CD8-positive, alpha-beta T cell (primary cell): ENCODE measurements at regions of chr15 and their contacts with region 1.

Region 1: DNA sequence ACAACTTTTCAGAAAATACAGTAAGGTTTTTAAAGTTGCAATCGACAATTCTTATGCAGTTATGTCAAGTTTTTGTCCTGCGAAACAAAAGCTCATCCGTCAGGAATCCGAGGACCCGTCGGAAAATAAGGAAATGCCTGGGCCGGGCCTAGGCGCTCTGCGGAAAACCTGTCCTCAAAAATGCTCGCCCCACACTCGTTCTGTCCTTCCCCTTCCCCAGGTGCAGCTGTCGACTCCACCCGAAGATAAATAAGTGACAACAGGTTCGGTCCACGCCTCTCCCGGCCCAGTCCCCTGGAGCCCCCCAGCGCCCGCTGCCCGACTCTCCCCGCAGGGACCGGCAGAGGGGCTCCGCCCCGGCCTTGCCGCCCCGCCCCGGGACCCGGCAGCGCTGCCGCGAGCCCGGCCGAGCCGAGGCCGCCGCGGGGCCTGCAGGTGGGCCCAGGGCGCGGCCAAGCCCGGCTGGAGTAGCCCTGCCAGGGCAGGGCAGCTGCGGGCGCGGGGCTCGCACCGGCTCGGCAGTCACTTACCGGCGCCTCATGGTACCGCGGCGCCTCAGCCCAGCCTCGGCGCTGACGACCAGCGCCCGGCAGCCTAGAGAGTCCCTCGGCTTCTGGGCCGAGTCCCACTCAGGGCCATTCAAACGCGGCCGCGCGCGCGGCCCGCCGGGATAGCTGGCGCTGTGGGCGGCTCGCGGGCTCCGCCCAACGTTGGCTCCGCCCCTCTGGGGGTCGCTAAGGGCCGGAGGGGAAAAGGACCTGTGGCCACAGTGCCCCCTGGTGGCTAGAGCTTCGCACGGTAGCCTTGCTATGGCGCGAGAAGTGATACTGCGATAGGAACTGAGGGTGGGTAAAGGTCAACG is at the start of gene KATNBL1:
- DNase-seq: peak; percentile 88 to 99 (median 97)
- ATAC-seq: peak; percentile 94
- H3K4me3 ChIP-seq: peak within 1 kb of the TSS; percentile 49 to 71
- H3K4me3 Mint-ChIP-seq: peak within 1 kb of the TSS; percentile 92
- H3K27ac ChIP-seq: peak within 1 kb of the TSS; percentile 38 to 62
- H3K27ac Mint-ChIP-seq: peak within 1 kb of the TSS; percentile 92
- H3K4me1 ChIP-seq: peaks cover 14% of the 10 kb centered on the region
- H3K4me1 Mint-ChIP-seq: peaks cover 26% of the 10 kb centered on the region
- H3K27me3 ChIP-seq: no peaks in the 10 kb centered on the region
- H3K27me3 Mint-ChIP-seq: no peaks in the 10 kb centered on the region
- CTCF ChIP-seq: peak; percentile 69
- total RNA-seq, gene KATNBL1: 9.3 to 10.0 TPM

Region 2: DNA sequence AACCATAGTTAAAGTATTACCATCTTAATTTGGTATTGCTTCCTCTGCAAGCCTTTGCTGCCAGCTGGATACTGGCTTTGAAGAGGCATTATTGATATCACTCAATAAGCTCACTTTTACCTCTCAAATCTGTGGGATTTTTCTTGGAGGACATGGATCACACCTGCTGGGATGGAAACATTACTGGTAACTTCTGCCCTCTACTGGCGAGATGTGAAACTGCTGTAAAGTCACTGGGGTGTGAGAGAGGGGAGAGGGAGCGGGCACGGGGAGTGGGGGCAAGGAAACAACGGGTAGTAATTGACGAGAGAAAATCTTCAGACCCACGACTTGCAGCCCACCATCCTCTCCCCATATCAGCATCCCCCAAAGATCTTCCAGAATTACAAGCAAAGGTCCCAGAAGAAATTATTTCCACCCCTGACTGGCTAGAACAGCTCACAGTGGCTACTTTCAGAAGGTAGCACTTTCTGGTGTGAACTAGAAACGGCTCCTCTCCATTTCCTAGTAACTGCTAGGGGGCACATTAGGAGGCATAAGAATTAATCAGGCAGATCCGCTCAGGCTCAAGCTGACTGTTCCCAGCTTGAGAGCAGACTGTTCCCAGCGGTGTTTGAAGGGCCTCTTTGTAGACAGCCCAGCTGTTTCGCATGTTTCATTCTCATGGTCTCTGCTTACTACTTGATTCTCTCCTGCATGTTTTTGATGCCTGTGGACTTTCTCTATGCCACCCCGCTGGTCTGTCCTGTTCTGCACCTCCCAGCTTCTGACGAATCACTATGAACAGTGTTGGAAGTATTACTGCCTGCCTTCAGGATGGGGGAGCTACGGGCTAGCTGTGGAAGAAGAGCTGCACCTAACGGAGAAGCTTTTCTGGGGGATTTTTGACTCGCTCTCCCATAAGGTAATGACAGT is 471.7 kb before region 1 on chr15:
- CTCF ChIA-PET with region 1: no interaction called
- POLR2A ChIA-PET with region 1: no interaction called
- intact Hi-C with region 1: loop called in 1 of 2 experiments (anchors 10 kb)
- DNase-seq: peak in 5 of 9 experiments; percentile 17 to 50 (median 26)
- ATAC-seq: no peak
- H3K4me3 ChIP-seq: no peak overlapping the region
- H3K4me3 Mint-ChIP-seq: no peak overlapping the region
- H3K27ac ChIP-seq: no peak overlapping the region
- H3K27ac Mint-ChIP-seq: no peak overlapping the region
- H3K4me1 ChIP-seq: no peaks in the 10 kb centered on the region
- H3K4me1 Mint-ChIP-seq: peaks cover 4% of the 10 kb centered on the region
- H3K27me3 ChIP-seq: no peaks in the 10 kb centered on the region
- H3K27me3 Mint-ChIP-seq: peaks cover 2% of the 10 kb centered on the region
- CTCF ChIP-seq: peak; percentile 79

Region 3: DNA sequence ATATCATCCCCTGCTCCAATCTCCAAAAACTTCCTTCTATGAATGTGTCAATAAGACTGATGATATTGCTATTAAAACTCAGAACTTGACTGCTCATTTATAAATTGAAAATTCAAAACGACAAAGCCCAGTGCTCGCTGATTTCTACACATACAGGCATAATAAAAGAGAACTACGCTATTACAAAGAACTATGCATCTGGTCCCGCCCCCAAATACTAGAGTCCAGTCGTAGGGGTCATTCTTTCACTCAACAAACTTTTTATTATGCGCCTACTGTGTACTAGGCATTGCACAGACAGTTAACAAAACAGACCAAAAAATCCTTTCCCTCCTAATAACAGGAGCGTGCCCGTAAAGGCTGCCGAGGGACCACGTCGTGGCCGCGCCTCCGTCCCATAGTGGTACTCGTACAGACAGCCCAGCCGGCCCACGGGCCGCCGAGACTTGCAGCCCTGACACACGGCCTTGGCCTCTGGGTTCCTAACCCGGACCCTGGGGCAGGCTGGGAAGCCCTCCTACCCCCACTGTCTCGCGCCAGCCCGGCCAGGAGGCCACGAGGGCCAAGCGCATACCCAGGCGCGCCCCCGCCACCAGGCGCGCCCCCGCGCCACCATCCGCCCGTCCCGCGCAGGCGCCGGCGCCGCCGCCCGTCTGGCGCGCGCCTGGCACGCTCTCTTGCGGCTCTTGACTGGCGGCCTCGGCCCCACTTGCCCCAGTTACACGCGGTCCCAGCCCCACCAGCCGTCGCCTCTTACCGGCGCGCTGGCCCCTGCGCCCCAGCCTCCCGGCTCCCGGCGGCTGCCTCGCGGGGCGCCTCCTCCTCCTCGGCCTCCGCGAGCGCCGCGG is 171.4 kb before region 1 on chr15:
- CTCF ChIA-PET with region 1: interaction called, 8 read pairs
- POLR2A ChIA-PET with region 1: interaction called, 3 read pairs
- intact Hi-C with region 1: loop called in 1 of 2 experiments (anchors 1 kb)
- DNase-seq: peak; percentile 44 to 89 (median 73)
- ATAC-seq: peak; percentile 84
- H3K4me3 ChIP-seq: peak overlapping the region; percentile 78 to 97
- H3K4me3 Mint-ChIP-seq: peak overlapping the region; percentile 94
- H3K27ac ChIP-seq: peak overlapping the region; percentile 75 to 88
- H3K27ac Mint-ChIP-seq: peak overlapping the region; percentile 94
- H3K4me1 ChIP-seq: peaks cover 19% of the 10 kb centered on the region
- H3K4me1 Mint-ChIP-seq: peaks cover 20% of the 10 kb centered on the region
- H3K27me3 ChIP-seq: no peaks in the 10 kb centered on the region
- H3K27me3 Mint-ChIP-seq: no peaks in the 10 kb centered on the region
- CTCF ChIP-seq: no peak

Region 4: GRCh38 chr15:34055853-34056595 is 153.6 kb before region 1 on chr15:
- CTCF ChIA-PET with region 1: interaction called, 55 read pairs
- POLR2A ChIA-PET with region 1: interaction called, 4 read pairs
- intact Hi-C with region 1: no loop called
- DNase-seq: no peak
- ATAC-seq: no peak
- H3K4me3 ChIP-seq: no peak overlapping the region
- H3K4me3 Mint-ChIP-seq: no peak overlapping the region
- H3K27ac ChIP-seq: no peak overlapping the region
- H3K27ac Mint-ChIP-seq: no peak overlapping the region
- H3K4me1 ChIP-seq: no peaks in the 10 kb centered on the region
- H3K4me1 Mint-ChIP-seq: no peaks in the 10 kb centered on the region
- H3K27me3 ChIP-seq: no peaks in the 10 kb centered on the region
- H3K27me3 Mint-ChIP-seq: no peaks in the 10 kb centered on the region
- CTCF ChIP-seq: no peak

Region 5: GRCh38 chr15:34065941-34066340 is 143.7 kb before region 1 on chr15:
- CTCF ChIA-PET with region 1: interaction called, 55 read pairs
- POLR2A ChIA-PET with region 1: interaction called, 6 read pairs
- intact Hi-C with region 1: loop called (anchors 1 kb)
- DNase-seq: no peak
- ATAC-seq: no peak
- H3K4me3 ChIP-seq: no peak overlapping the region
- H3K4me3 Mint-ChIP-seq: no peak overlapping the region
- H3K27ac ChIP-seq: no peak overlapping the region
- H3K27ac Mint-ChIP-seq: no peak overlapping the region
- H3K4me1 ChIP-seq: no peaks in the 10 kb centered on the region
- H3K4me1 Mint-ChIP-seq: peaks cover 3% of the 10 kb centered on the region
- H3K27me3 ChIP-seq: no peaks in the 10 kb centered on the region
- H3K27me3 Mint-ChIP-seq: no peaks in the 10 kb centered on the region
- CTCF ChIP-seq: no peak

Region 6: GRCh38 chr15:34109797-34110663 is 99.6 kb before region 1 on chr15:
- CTCF ChIA-PET with region 1: interaction called, 5 read pairs
- POLR2A ChIA-PET with region 1: interaction called, 3 read pairs
- intact Hi-C with region 1: loop called in 1 of 2 experiments (anchors 2 kb)
- DNase-seq: peak in 2 of 9 experiments; percentile 23 to 50
- ATAC-seq: no peak
- H3K4me3 ChIP-seq: no peak overlapping the region
- H3K4me3 Mint-ChIP-seq: no peak overlapping the region
- H3K27ac ChIP-seq: no peak overlapping the region
- H3K27ac Mint-ChIP-seq: no peak overlapping the region
- H3K4me1 ChIP-seq: no peaks in the 10 kb centered on the region
- H3K4me1 Mint-ChIP-seq: no peaks in the 10 kb centered on the region
- H3K27me3 ChIP-seq: no peaks in the 10 kb centered on the region
- H3K27me3 Mint-ChIP-seq: peaks cover 8% of the 10 kb centered on the region
- CTCF ChIP-seq: peak; percentile 49